HepG2 (cell line): ENCODE measurements at regions of chr2 and their contacts with region 1.

Region 1: GRCh38 chr2:124053796-124054195 is 28.7 kb downstream of the CNTNAP5 start:
- DNase-seq: no peak
- ATAC-seq: no peak
- H3K4me3 ChIP-seq: no peak overlapping the region
- H3K27ac ChIP-seq: no peak overlapping the region
- H3K4me1 ChIP-seq: no peaks in the 10 kb centered on the region
- H3K27me3 ChIP-seq: no peaks in the 10 kb centered on the region
- CTCF ChIP-seq: no peak
- EP300 ChIP-seq: no peak
- POLR2A ChIP-seq: no peak
- RAD21 ChIP-seq: no peak

Region 2: GRCh38 chr2:124092651-124093050 is 38.9 kb after region 1 on chr2:
- CTCF ChIA-PET with region 1: no interaction called
- POLR2A ChIA-PET with region 1: no interaction called
- in situ Hi-C with region 1: no loop called
- intact Hi-C with region 1: loop called (anchors 1 kb)
- DNase-seq: no peak
- ATAC-seq: no peak
- H3K4me3 ChIP-seq: no peak overlapping the region
- H3K27ac ChIP-seq: no peak overlapping the region
- H3K4me1 ChIP-seq: no peaks in the 10 kb centered on the region
- H3K27me3 ChIP-seq: no peaks in the 10 kb centered on the region
- CTCF ChIP-seq: no peak
- EP300 ChIP-seq: no peak
- POLR2A ChIP-seq: no peak
- RAD21 ChIP-seq: no peak

Region 3: DNA sequence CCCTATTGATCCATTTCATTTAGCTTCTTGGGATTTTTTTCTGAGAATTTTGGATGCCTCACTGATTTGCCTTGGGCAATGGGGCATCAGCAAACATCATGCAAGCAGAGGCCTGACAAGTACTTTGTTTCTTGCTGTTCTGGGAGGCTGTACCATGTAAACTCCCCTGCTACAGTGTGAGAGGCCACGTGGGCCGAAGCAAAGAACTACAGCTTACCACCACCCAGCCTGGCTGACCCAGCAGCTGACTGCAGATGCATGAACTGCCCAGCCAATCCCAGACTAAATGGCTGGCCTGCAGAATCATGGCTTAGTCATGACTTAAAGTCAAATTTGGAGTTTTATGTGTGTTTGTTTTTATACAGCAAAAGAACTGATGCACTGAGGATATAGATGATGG is 551.1 kb after region 1 on chr2:
- CTCF ChIA-PET with region 1: no interaction called
- POLR2A ChIA-PET with region 1: no interaction called
- in situ Hi-C with region 1: no loop called
- intact Hi-C with region 1: no loop called
- DNase-seq: no peak
- ATAC-seq: no peak
- H3K4me3 ChIP-seq: no peak overlapping the region
- H3K27ac ChIP-seq: no peak overlapping the region
- H3K4me1 ChIP-seq: peaks cover 5% of the 10 kb centered on the region; the same call in 1 of the 2 replicates
- H3K27me3 ChIP-seq: no peaks in the 10 kb centered on the region
- CTCF ChIP-seq: no peak
- EP300 ChIP-seq: no peak
- POLR2A ChIP-seq: no peak
- RAD21 ChIP-seq: no peak

Region 4: DNA sequence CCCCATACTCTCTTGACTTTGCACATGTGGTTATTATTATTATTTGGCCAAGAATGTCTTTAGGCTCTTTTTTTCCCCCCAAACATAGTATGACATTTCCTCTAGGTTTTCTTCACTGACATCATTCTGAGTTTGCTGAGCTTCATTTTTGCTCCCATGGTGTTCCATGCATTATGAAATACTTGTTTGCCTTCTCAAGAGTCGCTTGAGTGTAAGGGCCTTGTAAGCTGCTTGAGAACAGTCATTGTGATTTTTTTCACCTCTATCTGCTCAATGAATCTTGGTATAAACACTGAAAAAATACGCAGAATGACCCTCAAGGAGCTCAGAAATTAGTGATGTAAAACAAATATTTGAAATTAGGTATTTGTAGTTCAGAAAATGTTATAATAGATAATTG is 660.2 kb after region 1 on chr2:
- CTCF ChIA-PET with region 1: no interaction called
- POLR2A ChIA-PET with region 1: no interaction called
- in situ Hi-C with region 1: no loop called
- intact Hi-C with region 1: no loop called
- DNase-seq: no peak
- ATAC-seq: no peak
- H3K4me3 ChIP-seq: no peak overlapping the region
- H3K27ac ChIP-seq: no peak overlapping the region
- H3K4me1 ChIP-seq: no peaks in the 10 kb centered on the region
- H3K27me3 ChIP-seq: no peaks in the 10 kb centered on the region
- CTCF ChIP-seq: no peak
- EP300 ChIP-seq: no peak
- POLR2A ChIP-seq: no peak
- RAD21 ChIP-seq: no peak